ENCODE measurements at regions of chr12 and their contacts with region 1.

Region 1: GRCh38 chr12:12384571-12385340 is 27.9 kb downstream of the BORCS5 start:
- DNase-seq: no peak

Region 2: DNA sequence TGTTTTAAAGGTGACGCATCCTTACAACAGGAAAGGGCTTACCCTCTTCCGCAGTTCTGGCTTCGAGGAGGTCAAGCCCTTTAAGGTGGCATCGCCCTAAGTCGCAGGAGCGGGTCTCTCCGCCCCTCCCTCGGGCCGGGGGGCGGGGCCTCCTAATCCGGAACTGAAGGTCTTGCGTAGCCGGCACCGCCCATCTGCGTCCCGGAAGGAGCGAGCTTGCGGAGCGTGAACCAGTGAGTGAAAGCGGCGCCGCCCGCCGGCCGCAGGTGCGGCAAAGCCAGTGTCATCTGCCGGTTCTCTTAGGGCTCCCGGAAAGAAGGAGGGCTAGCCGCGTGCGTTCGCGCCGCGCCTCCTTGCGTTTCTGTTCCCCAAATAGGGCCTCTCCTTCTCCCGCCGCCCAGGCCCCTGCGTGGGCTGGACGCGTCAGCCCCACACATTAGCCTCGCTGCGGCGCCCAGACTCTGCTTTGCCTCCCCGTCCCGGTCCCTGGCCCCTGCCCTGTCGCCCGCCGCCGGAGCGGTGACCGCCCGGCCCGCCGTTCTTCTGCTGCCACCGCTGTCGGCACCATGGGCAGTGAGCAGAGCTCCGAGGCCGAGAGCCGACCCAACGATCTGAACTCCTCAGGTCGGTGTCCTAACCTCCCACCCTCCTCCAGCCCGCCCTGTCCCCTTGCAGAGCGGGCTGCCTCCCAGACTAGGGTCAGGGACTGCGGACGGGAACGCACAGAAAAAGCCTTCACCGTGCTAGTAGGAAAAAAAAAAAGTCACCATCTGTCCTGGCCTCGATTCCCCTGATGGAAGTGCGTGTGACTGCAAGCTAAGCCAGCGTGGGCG is 27.7 kb before region 1 on chr12 and contains the start of gene BORCS5:
- intact Hi-C with region 1: loop called in 1 of 2 experiments (anchors 2 kb)
- DNase-seq: peak; percentile 99
- total RNA-seq, gene BORCS5: 11.6 to 17.9 TPM